Activated T-helper 1 cell treated with anti-CD3 and anti-CD28 coated beads, Interleukin-12 subunit alpha, Interleukin-12 subunit beta, Interleukin-2, Interleukin-4 antibody, amounts not matched to agents 30 ng/mL and 10 ng/mL and 1 ng/mL, durations not matched to agents 14 hours and 24 hours and 36 hours (primary cell): ENCODE measurements at regions of chr11 and their contacts with region 1.

Region 1: GRCh38 chr11:85977751-85978160 is 91.1 kb downstream of the PICALM start:
- DNase-seq: no peak
- H3K4me3 Mint-ChIP-seq: no peak overlapping the region
- H3K27ac Mint-ChIP-seq: no peak overlapping the region
- H3K4me1 Mint-ChIP-seq: peaks cover 33% of the 10 kb centered on the region
- H3K27me3 Mint-ChIP-seq: no peaks in the 10 kb centered on the region

Region 2: GRCh38 chr11:85913513-85913912 is 64.2 kb before region 1 on chr11:
- intact Hi-C with region 1: no loop called
- DNase-seq: no peak
- H3K4me3 Mint-ChIP-seq: no peak overlapping the region
- H3K27ac Mint-ChIP-seq: no peak overlapping the region
- H3K4me1 Mint-ChIP-seq: no peaks in the 10 kb centered on the region
- H3K27me3 Mint-ChIP-seq: peaks cover 7% of the 10 kb centered on the region

Region 3: GRCh38 chr11:85961930-85962363 is 15.8 kb before region 1 on chr11:
- intact Hi-C with region 1: loop called (anchors 2 kb)
- DNase-seq: no peak
- H3K4me3 Mint-ChIP-seq: no peak overlapping the region
- H3K27ac Mint-ChIP-seq: no peak overlapping the region
- H3K4me1 Mint-ChIP-seq: peaks cover 18% of the 10 kb centered on the region
- H3K27me3 Mint-ChIP-seq: no peaks in the 10 kb centered on the region

Region 4: DNA sequence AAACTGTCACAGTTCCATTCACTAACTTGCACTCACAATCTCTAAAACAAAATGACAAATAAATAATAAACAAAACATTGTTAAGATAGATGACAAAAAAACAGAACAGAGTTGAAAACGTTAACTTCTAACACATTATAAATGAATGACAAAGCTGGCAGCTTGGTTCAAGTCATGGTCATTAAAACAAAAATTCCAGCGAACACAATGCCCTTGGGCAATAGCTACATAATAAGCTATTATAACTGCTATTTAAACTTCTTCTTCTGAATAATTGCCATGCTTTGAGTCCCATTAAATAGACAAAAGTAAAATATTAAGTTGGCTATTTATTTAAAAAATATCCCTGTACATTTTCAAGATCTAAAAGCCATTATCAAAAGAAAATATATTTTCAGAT is 36.5 kb after region 1 on chr11:
- intact Hi-C with region 1: loop called (anchors 5 kb)
- DNase-seq: no peak
- H3K4me3 Mint-ChIP-seq: no peak overlapping the region
- H3K27ac Mint-ChIP-seq: no peak overlapping the region
- H3K4me1 Mint-ChIP-seq: peaks cover 34% of the 10 kb centered on the region
- H3K27me3 Mint-ChIP-seq: no peaks in the 10 kb centered on the region